Lower leg skin (tissue), 4 donors: ENCODE measurements at regions of chr4 and their contacts with region 1.

Region 1: DNA sequence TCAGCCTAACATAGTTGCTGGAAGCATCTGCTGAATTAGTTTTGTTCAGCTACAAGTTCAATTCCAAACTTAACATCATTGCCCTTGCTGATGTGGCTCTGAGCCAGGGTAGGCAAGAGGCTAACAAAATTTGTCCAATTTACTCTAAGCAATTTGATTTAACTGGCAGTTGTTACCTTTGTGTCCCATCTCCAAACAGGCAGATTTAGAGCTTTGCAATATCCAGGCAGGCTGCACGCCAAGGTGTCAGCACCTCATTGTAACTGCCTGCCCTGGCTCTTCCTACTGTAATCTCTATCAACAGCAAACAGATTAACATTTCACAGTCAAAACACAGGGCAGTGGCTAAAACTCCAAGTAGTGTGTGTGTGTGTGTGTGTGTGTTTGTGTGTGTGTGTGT is 2070.6 kb downstream of the PCDH7 start:
- DNase-seq: no peak
- H3K4me3 ChIP-seq: no peak overlapping the region
- CTCF ChIP-seq: no peak
- POLR2A ChIP-seq: no peak

Region 2: DNA sequence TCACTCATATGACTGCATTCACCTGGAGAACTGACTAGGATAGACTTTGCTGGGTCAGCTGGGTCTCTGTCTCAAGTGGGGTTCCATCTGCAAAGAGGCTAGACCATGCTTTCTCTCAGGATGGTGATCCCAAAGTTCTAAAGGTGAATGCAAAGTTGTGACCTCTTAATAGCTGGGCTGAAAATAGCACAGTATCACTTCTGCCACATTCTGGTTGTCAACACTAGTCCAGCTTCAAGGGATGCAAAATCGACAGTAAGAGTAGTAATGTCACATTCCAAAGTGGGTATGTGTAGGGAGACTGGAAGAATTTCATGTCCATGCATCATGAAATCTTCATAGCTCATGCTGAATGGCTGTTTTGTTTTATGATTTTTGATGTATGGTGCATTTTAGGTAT is 1656.1 kb before region 1 on chr4:
- intact Hi-C with region 1: loop called (anchors 5 kb)
- DNase-seq: no peak
- H3K4me3 ChIP-seq: no peak overlapping the region
- CTCF ChIP-seq: no peak
- POLR2A ChIP-seq: no peak